ENCODE measurements at regions of chr12 and their contacts with region 1.

Region 1: DNA sequence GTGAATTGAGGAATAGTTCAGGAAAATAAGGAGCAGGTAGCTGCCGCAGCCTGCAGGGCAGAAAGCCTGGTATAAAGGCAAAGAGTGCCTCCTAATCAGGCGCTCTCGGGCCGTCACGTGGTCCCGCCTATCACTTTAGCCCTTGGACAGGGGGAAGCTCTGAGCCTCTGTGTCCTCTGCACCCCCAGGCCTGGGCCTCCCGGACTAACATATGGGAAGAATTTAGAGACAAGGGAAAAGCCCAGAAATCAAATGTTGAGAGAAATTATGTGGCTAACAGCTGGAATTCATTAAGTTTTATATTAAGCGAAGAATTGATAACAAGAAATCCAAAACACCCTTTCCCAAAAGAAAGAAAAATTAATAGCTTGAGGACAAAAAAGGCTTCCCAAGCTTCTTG is 417.7 kb downstream of the ATP23 start:
- DNase-seq: no peak
- H3K4me3 ChIP-seq: no peak overlapping the region
- H3K27ac ChIP-seq: peak overlapping the region; percentile 43
- H3K27me3 ChIP-seq: no peaks in the 10 kb centered on the region
- CTCF ChIP-seq: no peak

Region 2: GRCh38 chr12:58346032-58346632 is 13.0 kb before region 1 on chr12:
- CTCF ChIA-PET with region 1: interaction called, 11 read pairs
- POLR2A ChIA-PET with region 1: no interaction called
- DNase-seq: no peak
- H3K4me3 ChIP-seq: no peak overlapping the region
- H3K27ac ChIP-seq: no peak overlapping the region
- H3K27me3 ChIP-seq: no peaks in the 10 kb centered on the region
- CTCF ChIP-seq: peak; percentile 75